ENCODE measurements at regions of chr6 and their contacts with region 1.

Region 1: DNA sequence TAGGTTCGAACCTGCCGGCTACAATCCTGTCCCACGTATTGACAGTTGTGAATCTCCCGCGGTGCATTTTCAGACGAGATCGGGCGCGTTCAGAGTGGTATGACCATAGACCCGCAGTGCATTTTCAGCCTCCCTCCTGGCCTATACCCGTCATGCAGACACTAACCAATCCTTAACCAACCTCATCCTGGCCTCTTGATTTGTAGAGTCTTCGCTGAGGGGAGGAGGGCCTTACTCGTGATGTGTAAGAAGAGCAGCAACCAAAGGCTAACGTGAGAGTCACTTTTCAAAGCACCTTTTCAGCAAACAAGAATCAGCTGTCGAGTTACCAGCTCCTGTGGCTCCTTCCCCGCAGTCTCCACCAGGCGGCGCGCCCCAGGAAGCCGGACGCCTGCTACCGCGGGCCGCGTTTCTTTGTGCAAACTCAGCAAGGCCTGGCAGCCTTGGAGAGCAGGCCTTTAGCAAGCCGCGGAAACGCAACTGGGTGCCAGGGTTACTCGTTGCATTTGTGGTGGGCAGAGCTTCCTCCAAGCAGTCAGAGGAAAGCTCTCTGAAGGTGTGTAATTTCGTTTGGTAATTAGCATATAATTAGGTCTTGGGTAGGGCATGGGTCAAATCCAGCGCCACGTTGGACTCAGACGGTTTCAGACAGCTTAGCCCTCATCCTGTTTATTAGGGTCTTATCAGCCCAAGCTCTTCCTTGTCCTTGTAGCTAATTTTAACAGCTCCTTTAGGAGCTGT is 139.8 kb downstream of the OR2B2 start:
- DNase-seq: peak; percentile 94
- H3K4me3 Mint-ChIP-seq: peak overlapping the region; percentile 6
- H3K27ac Mint-ChIP-seq: peak overlapping the region; percentile 46
- H3K4me1 Mint-ChIP-seq: peaks cover 22% of the 10 kb centered on the region
- H3K27me3 Mint-ChIP-seq: peaks cover 19% of the 10 kb centered on the region

Region 2: GRCh38 chr6:27743818-27744217 is 28.6 kb before region 1 on chr6:
- CTCF ChIA-PET with region 1: interaction called, 14 read pairs
- POLR2A ChIA-PET with region 1: no interaction called
- DNase-seq: no peak
- H3K4me3 Mint-ChIP-seq: no peak overlapping the region
- H3K27ac Mint-ChIP-seq: no peak overlapping the region
- H3K4me1 Mint-ChIP-seq: peaks cover 10% of the 10 kb centered on the region
- H3K27me3 Mint-ChIP-seq: peaks cover 27% of the 10 kb centered on the region

Region 3: GRCh38 chr6:27761391-27761790 is 11.0 kb before region 1 on chr6:
- CTCF ChIA-PET with region 1: interaction called, 51 read pairs
- POLR2A ChIA-PET with region 1: interaction called, 12 read pairs
- DNase-seq: no peak
- H3K4me3 Mint-ChIP-seq: no peak overlapping the region
- H3K27ac Mint-ChIP-seq: no peak overlapping the region
- H3K4me1 Mint-ChIP-seq: peaks cover 39% of the 10 kb centered on the region
- H3K27me3 Mint-ChIP-seq: no peaks in the 10 kb centered on the region

Region 4: GRCh38 chr6:27785294-27785693 is 12.9 kb after region 1 on chr6:
- CTCF ChIA-PET with region 1: interaction called, 27 read pairs
- POLR2A ChIA-PET with region 1: interaction called, 5 read pairs
- DNase-seq: no peak
- H3K4me3 Mint-ChIP-seq: no peak overlapping the region
- H3K27ac Mint-ChIP-seq: no peak overlapping the region
- H3K4me1 Mint-ChIP-seq: no peaks in the 10 kb centered on the region
- H3K27me3 Mint-ChIP-seq: peaks cover 34% of the 10 kb centered on the region

Region 5: GRCh38 chr6:29216528-29216927 is 1444.1 kb after region 1 on chr6:
- CTCF ChIA-PET with region 1: no interaction called
- POLR2A ChIA-PET with region 1: no interaction called
- DNase-seq: no peak
- H3K4me3 Mint-ChIP-seq: no peak overlapping the region
- H3K27ac Mint-ChIP-seq: no peak overlapping the region
- H3K4me1 Mint-ChIP-seq: no peaks in the 10 kb centered on the region
- H3K27me3 Mint-ChIP-seq: peaks cover 12% of the 10 kb centered on the region

Measured in activated CD4-positive, alpha-beta memory T cell treated with anti-CD3 and anti-CD28 coated beads, Interleukin-2, amount 10 ng/mL, durations not matched to agents 7 days and 5 days (primary cell).